Left ventricle myocardium superior (tissue), 1 donor: ENCODE measurements at regions of chr6 and their contacts with region 1.

Region 1: GRCh38 chr6:83514866-83515466 is 2.6 kb downstream of the PRSS35 start:
- DNase-seq: no peak
- ATAC-seq: no peak

Region 2: GRCh38 chr6:82823361-82823760 is 691.6 kb before region 1 on chr6:
- intact Hi-C with region 1: no loop called
- DNase-seq: no peak
- ATAC-seq: no peak

Region 3: DNA sequence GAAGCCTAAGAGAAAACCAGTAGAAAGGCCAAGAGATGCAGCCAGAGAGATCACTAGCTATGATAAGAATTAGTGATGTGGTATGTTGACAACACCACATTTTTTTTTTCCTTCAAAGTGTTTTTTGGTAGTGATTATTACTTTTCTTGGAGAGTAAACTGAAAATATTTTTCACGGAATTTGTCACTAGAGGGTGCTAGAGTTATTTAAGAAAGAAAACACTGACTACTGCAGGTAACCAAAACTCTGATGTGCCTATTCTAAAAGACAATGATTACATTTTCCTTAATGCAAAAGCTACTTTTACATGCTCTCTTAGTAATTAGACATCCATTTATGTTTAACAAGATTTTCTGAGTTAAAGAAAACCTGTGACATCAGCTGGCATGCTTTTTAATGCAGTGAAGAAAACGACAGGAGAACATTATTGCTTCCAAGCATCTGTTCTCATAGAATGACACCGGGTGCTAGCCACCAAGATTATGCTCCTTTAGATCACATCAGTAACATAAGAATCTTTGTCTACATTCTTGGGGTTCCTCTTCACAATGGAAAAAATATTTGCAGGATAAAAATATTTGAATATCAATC is 293.0 kb before region 1 on chr6:
- intact Hi-C with region 1: loop called (anchors 2 kb)
- DNase-seq: no peak
- ATAC-seq: no peak

Region 4: DNA sequence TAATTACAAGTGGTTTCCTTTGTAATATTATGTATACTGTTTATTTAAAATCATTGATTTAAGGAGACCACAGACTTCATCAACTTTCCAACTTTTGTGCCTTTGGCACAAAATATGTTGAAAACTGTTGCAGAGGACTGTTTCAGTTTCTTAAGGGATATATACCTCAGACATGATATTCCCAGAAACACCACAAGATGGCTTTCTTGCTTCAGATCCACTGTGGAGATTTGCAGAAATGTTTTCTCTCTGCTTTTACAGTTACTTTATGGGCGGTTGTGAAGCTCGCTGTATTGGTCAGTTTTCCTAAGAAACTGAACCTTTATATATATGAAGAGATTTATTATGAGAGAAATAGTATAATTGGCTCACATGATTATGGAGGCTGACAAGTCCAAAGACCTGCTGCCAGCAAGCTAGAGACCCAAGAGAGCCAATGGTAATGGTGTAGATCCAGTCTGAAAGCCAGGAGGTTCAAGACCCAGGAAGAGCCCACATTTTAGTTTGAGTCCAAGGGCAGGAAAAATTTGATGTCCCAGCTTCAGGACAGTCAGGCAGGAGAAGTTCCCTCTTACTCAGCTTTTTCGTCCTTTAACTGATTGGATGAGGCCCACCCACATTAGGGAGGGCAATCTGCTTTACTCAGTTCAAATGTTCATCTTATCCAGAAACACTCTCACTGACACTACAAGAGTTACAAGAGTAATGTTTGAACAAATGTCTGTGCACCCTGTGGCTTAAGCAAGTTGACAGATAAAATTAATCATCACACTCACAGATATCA is 96.9 kb before region 1 on chr6:
- intact Hi-C with region 1: loop called (anchors 5 kb)
- DNase-seq: no peak
- ATAC-seq: peak; percentile 44